Head of caudate nucleus (tissue), 42 donors: ENCODE measurements at regions of chr9 and their contacts with region 1.

Region 1: GRCh38 chr9:69971643-69972449 is 71.8 kb upstream of the MAMDC2 start:
- DNase-seq: peak; percentile 27 to 87 (median 76)

Region 2: GRCh38 chr9:68781928-68782327 is 1189.9 kb before region 1 on chr9:
- intact Hi-C with region 1: no loop called
- DNase-seq: no peak

Region 3: GRCh38 chr9:70020991-70021571 is 49.2 kb after region 1 on chr9:
- intact Hi-C with region 1: no loop called
- DNase-seq: peak in 41 of 42 donors; percentile 31 to 89 (median 70)

Region 4: GRCh38 chr9:70111042-70111602 is 139.3 kb after region 1 on chr9:
- intact Hi-C with region 1: loop called (anchors 5 kb)
- DNase-seq: peak; percentile 30 to 86 (median 68)

Region 5: DNA sequence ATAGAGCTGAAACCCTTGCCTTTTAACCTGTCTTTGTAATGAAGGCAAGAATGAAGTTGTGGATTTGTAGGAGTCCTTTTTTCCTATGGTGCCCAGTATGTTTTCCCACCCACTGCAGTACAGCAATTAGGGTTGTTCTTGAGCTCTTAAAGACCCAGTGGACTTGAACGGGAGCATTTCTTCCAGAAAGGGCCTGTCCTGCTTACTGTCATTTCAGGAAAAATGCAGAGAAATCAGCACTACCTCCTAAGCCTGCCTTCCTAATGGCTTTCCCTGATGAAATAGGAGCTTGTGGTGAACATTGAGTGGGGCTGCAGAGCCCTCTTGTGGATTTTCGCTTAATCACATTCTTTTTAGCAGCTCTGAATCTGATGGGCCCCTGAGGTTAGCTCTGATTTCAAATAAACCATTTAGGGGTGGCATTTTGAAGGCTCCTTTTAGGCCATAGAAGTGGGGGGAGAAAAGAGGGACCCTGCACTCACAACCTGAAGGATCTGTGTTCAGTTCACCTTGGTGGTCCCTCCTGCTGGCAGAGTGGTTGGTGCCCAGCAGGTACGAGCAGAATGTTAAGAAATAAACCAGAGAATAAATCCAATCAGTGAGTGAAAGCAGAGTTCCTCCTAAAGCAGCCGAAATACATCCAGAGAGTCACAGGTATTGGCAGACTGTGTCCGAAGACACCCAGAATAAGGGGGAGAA is 630.6 kb after region 1 on chr9:
- intact Hi-C with region 1: loop called (anchors 5 kb)
- DNase-seq: peak in 41 of 42 donors; percentile 32 to 87 (median 68)